Esophagus muscularis mucosa (tissue), 4 donors: ENCODE measurements at regions of chr6 and their contacts with region 1.

Region 1: GRCh38 chr6:51702851-51703250 is 384.6 kb downstream of the PKHD1 start:
- DNase-seq: no peak
- H3K4me3 ChIP-seq: no peak overlapping the region
- H3K27ac ChIP-seq: no peak overlapping the region
- H3K4me1 ChIP-seq: no peaks in the 10 kb centered on the region
- H3K27me3 ChIP-seq: no peaks in the 10 kb centered on the region
- CTCF ChIP-seq: no peak
- EP300 ChIP-seq: no peak
- POLR2A ChIP-seq: no peak

Region 2: GRCh38 chr6:51654647-51655046 is 48.2 kb before region 1 on chr6:
- intact Hi-C with region 1: loop called (anchors 5 kb)
- DNase-seq: no peak
- H3K4me3 ChIP-seq: no peak overlapping the region
- H3K27ac ChIP-seq: no peak overlapping the region
- H3K4me1 ChIP-seq: no peaks in the 10 kb centered on the region
- H3K27me3 ChIP-seq: no peaks in the 10 kb centered on the region
- CTCF ChIP-seq: no peak
- EP300 ChIP-seq: no peak
- POLR2A ChIP-seq: no peak

Region 3: DNA sequence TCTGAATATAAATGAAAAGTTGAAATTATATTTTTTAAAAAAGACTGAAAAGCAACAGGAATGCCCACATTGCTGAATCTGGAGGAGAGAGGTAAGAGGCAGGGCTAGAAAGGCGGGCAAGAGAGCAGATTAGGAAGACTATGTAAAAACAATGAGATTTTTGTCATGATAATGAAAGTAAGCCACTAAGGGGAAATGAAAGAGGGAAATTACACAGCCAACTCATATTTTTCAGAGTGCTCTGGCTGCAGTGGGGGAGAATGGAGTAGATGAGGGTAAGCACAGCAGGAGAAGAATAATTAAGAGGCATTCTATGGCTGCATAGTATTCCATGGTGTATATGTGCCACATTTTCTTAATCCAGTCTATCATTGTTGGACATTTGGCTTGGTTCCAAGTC is 102.7 kb after region 1 on chr6:
- intact Hi-C with region 1: no loop called
- DNase-seq: no peak
- H3K4me3 ChIP-seq: no peak overlapping the region
- H3K27ac ChIP-seq: no peak overlapping the region
- H3K4me1 ChIP-seq: peaks cover 0 to 3% (median 3%) of the 10 kb centered on the region in 4 donors
- H3K27me3 ChIP-seq: no peaks in the 10 kb centered on the region
- CTCF ChIP-seq: no peak
- EP300 ChIP-seq: no peak
- POLR2A ChIP-seq: no peak